ENCODE measurements at regions of chr7 and their contacts with region 1.

Region 1: DNA sequence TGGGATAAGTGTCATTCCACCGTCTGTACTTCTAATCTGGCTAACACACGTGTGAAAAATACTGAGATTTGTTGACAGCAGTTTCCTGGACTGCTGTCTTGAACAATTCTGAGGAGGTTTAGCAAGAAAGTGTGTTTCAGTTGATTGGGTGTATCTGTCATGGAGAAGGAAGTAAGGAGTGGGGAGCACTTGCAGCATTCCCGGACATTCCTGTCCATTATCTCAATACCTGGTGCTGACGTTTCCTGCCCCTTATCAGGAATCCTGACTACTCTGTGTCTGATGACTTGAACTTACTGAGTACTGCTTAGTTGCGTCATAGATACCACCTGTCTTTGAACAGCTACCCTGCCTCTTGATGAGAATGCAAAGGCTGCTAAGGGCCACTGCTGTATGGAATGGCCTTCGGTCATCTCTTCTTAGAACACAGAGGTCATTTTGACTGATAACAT is 72.0 kb upstream of the VKORC1L1 start:
- DNase-seq: peak; percentile 62 to 76
- H3K4me3 ChIP-seq: no peak overlapping the region
- H3K4me3 Mint-ChIP-seq: no peak overlapping the region
- H3K27ac Mint-ChIP-seq: peak overlapping the region; percentile 48
- H3K4me1 ChIP-seq: peaks cover 18% of the 10 kb centered on the region
- H3K4me1 Mint-ChIP-seq: peaks cover 8% of the 10 kb centered on the region
- H3K27me3 ChIP-seq: no peaks in the 10 kb centered on the region
- H3K27me3 Mint-ChIP-seq: no peaks in the 10 kb centered on the region
- CTCF ChIP-seq: no peak

Region 2: GRCh38 chr7:65846009-65846570 is 45.2 kb after region 1 on chr7:
- CTCF ChIA-PET with region 1: no interaction called
- POLR2A ChIA-PET with region 1: no interaction called
- intact Hi-C with region 1: loop called (anchors 5 kb)
- DNase-seq: no peak
- H3K4me3 ChIP-seq: no peak overlapping the region
- H3K4me3 Mint-ChIP-seq: no peak overlapping the region
- H3K27ac Mint-ChIP-seq: no peak overlapping the region
- H3K4me1 ChIP-seq: no peaks in the 10 kb centered on the region
- H3K4me1 Mint-ChIP-seq: no peaks in the 10 kb centered on the region
- H3K27me3 ChIP-seq: no peaks in the 10 kb centered on the region
- H3K27me3 Mint-ChIP-seq: no peaks in the 10 kb centered on the region
- CTCF ChIP-seq: no peak